ENCODE measurements at regions of chr11 and their contacts with region 1.

Region 1: GRCh38 chr11:86608251-86608799 is 64.1 kb downstream of the ME3 start:
- DNase-seq: peak; percentile 67 to 84
- ATAC-seq: peak; percentile 91
- H3K4me3 ChIP-seq: peak overlapping the region in 1 of 2 donors; percentile 41
- H3K27ac ChIP-seq: no peak overlapping the region
- H3K4me1 ChIP-seq: peaks cover 2 to 3% of the 10 kb centered on the region in 2 donors
- H3K27me3 ChIP-seq: no peaks in the 10 kb centered on the region

Region 2: GRCh38 chr11:86818466-86819192 is 210.3 kb after region 1 on chr11:
- intact Hi-C with region 1: loop called (anchors 5 kb)
- DNase-seq: no peak
- ATAC-seq: peak; percentile 66
- H3K4me3 ChIP-seq: no peak overlapping the region
- H3K27ac ChIP-seq: no peak overlapping the region
- H3K4me1 ChIP-seq: peaks cover 3 to 8% of the 10 kb centered on the region in 2 donors
- H3K27me3 ChIP-seq: no peaks in the 10 kb centered on the region

Measured in aorta (tissue), 5 donors.